Activated T-helper 1 cell treated with anti-CD3 and anti-CD28 coated beads, Interleukin-12 subunit alpha, Interleukin-12 subunit beta, Interleukin-2, Interleukin-4 antibody, amounts not matched to agents 30 ng/mL and 10 ng/mL and 1 ng/mL, durations not matched to agents 14 hours and 24 hours and 36 hours (primary cell): ENCODE measurements at regions of chr14 and their contacts with region 1.

Region 1: DNA sequence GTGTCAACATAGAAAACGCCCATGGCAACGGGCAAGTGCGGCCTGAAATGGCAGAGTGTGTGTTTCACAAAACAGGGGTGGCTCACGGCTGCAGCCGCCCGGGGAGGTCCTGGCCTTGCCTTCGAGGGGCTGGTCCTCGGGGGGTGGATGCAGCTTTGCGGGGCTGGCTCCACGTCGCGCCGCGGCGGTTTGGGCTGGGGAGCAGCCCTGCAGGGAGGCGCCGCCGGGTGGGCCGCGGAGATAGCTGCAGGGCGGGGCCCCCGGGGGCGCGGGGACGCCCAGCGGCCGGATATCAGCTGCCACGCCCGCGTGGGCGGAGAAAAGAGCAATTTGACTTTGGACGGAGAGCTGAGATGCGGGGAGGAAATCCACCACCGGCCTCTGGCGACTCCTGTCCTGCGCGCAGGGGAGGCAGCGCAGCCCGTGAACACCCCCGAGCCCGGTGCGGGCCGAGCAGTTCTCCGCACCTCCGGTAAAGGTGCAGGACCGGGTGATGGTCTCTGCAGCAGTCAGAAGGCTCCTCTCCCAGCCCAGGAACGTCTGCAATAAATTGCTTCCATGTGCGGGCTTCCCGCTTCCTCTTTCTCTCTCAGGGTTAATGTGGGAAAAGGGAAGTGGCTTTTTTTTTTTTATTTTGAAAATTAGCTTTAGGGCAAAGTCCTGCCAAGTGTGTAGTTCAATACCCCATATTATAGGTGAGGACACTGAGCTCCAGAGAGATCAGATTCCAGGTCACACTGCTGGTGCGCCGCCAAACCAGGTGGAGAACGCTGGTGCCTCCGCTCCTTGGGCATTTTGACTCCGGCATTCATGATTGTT is 110.5 kb downstream of the ARF6 start:
- DNase-seq: peak; percentile 81
- H3K4me3 Mint-ChIP-seq: peak overlapping the region; percentile 88
- H3K27ac Mint-ChIP-seq: peak overlapping the region; percentile 98
- H3K4me1 Mint-ChIP-seq: peaks cover 68% of the 10 kb centered on the region
- H3K27me3 Mint-ChIP-seq: no peaks in the 10 kb centered on the region

Region 2: GRCh38 chr14:49585803-49586672 is 417.4 kb before region 1 on chr14 and contains the start of gene RPS29:
- intact Hi-C with region 1: no loop called
- DNase-seq: peak; percentile 97
- H3K4me3 Mint-ChIP-seq: peak within 1 kb of the TSS; percentile 93
- H3K27ac Mint-ChIP-seq: peak within 1 kb of the TSS; percentile 99
- H3K4me1 Mint-ChIP-seq: peaks cover 46% of the 10 kb centered on the region
- H3K27me3 Mint-ChIP-seq: peaks cover 3% of the 10 kb centered on the region
- total RNA-seq, gene RPS29: 1,860 and 1,913 TPM in 2 replicates

Region 3: GRCh38 chr14:49862089-49862673 is 141.2 kb before region 1 on chr14:
- intact Hi-C with region 1: loop called (anchors 1 kb)
- DNase-seq: peak; percentile 81
- H3K4me3 Mint-ChIP-seq: no peak overlapping the region
- H3K27ac Mint-ChIP-seq: no peak overlapping the region
- H3K4me1 Mint-ChIP-seq: peaks cover 10% of the 10 kb centered on the region
- H3K27me3 Mint-ChIP-seq: peaks cover 6% of the 10 kb centered on the region

Region 4: DNA sequence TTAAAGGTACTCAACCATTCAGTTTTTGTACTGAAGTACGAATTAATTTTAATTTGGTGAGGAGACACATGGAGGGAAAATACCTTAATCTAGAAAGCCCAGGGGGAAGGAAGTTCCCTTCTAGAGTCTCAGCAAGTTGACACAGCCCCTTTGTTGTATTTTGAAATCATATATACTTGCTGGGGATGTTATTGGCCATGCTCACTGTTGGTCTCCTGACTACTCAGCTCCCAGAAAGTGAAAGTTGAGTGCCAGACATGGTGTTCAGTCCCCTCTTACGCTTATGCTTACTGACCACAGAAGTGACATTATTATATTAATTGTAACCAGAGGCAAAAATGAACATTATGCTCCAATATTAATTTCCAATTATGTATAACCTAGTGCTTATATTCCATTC is 82.5 kb before region 1 on chr14:
- intact Hi-C with region 1: no loop called
- DNase-seq: no peak
- H3K4me3 Mint-ChIP-seq: no peak overlapping the region
- H3K27ac Mint-ChIP-seq: no peak overlapping the region
- H3K4me1 Mint-ChIP-seq: peaks cover 29% of the 10 kb centered on the region
- H3K27me3 Mint-ChIP-seq: no peaks in the 10 kb centered on the region

Region 5: DNA sequence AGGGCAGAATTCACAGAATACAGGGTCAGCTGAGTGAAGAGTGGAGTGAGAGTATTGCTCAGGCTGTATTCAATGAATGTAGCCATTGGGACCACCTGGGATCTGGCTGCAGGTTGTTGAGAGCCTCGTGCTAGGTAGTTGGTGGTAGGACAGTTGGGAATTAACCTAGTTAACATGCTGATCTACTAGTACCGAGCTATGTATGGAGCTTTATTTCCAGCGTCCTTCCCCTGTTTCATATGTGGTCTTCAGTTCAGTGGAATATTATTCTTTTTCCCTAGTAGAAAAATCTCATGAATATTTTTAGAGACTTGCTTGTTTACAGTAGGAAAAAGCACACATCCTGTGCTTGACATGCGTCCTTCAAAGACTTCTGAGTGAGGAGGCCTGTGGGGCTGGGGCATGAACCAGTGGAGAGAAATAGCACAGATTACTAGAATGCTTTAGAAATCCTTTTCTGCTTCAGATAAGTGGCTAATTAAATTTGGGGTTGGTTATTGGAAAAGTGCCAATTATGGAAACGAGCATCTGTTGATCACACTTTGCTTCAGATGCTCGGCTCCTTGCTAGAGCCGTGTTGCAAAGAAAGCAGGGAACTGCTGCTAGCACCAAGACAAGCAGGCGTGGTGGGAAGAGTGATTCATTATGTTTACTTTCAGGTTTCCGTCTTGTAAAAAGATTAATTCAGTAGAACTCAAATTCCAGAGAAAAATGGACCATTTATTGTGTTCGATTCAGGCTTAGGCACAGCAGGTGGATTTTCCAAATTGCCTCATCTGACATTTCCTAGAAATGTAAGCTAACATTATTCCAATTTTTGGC is 56.9 kb before region 1 on chr14:
- intact Hi-C with region 1: loop called (anchors 1 kb)
- DNase-seq: no peak
- H3K4me3 Mint-ChIP-seq: peak overlapping the region; percentile 71
- H3K27ac Mint-ChIP-seq: peak overlapping the region; percentile 90
- H3K4me1 Mint-ChIP-seq: peaks cover 79% of the 10 kb centered on the region
- H3K27me3 Mint-ChIP-seq: no peaks in the 10 kb centered on the region

Region 6: GRCh38 chr14:49984424-49984823 is 19.0 kb before region 1 on chr14:
- intact Hi-C with region 1: loop called (anchors 1 kb)
- DNase-seq: no peak
- H3K4me3 Mint-ChIP-seq: no peak overlapping the region
- H3K27ac Mint-ChIP-seq: peak overlapping the region; percentile 93
- H3K4me1 Mint-ChIP-seq: peaks cover 66% of the 10 kb centered on the region
- H3K27me3 Mint-ChIP-seq: no peaks in the 10 kb centered on the region

Region 7: DNA sequence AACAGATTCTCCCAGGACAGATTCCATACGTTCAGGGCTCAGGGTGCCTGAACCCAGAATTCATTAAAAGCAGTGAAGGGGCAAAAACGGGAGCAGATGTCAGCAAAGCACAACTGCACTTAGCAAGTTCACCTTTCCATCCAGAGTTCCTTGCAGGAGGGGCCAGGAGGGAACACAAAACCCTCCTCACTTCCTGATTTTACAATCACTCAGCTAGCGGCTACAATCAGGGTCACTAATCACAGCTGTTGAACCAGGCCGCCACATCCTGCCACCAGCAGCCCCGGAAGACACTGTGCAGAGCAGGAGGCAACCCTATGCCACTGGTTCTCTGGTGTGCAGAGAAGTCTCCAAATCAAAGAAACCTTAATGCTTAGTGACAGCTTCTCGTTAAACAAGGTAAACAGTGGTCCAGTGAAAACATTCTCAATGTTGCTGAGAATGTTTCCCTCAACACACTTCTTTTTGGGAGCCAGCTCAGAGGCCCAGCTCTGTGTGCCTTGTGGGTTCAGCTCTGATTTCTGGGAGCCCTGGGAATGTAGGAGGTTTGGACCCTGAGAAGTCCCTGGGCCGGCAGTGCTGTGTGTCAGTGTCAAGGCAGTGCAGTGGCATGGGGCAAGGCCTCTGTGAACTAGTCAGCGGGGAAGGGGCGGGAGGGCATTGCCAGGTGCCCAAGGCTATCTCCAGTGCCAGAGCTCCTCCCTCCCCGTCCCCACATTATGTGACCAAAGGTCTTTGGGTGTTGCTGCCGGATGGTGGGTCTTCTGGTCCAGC is 58.4 kb after region 1 on chr14:
- intact Hi-C with region 1: loop called (anchors 1 kb)
- DNase-seq: peak; percentile 67
- H3K4me3 Mint-ChIP-seq: peak overlapping the region; percentile 99
- H3K27ac Mint-ChIP-seq: peak overlapping the region; percentile 100
- H3K4me1 Mint-ChIP-seq: peaks cover 94% of the 10 kb centered on the region
- H3K27me3 Mint-ChIP-seq: no peaks in the 10 kb centered on the region

Region 8: GRCh38 chr14:50231475-50232275 is 228.3 kb after region 1 on chr14 and contains the start of gene SOS2:
- intact Hi-C with region 1: loop called (anchors 1 kb)
- DNase-seq: peak; percentile 82
- H3K4me3 Mint-ChIP-seq: peak within 1 kb of the TSS; percentile 86
- H3K27ac Mint-ChIP-seq: peak within 1 kb of the TSS; percentile 89
- H3K4me1 Mint-ChIP-seq: peaks cover 44% of the 10 kb centered on the region
- H3K27me3 Mint-ChIP-seq: no peaks in the 10 kb centered on the region
- total RNA-seq, gene SOS2: 19.9 and 21.6 TPM in 2 replicates

Region 9: GRCh38 chr14:50520947-50521815 is 517.8 kb after region 1 on chr14:
- intact Hi-C with region 1: loop called (anchors 5 kb)
- DNase-seq: peak; percentile 33
- H3K4me3 Mint-ChIP-seq: peak overlapping the region; percentile 61
- H3K27ac Mint-ChIP-seq: peak overlapping the region; percentile 95
- H3K4me1 Mint-ChIP-seq: peaks cover 41% of the 10 kb centered on the region
- H3K27me3 Mint-ChIP-seq: no peaks in the 10 kb centered on the region